AG04450 (cell line): ENCODE measurements at regions of chr2 and their contacts with region 1.

Region 1: DNA sequence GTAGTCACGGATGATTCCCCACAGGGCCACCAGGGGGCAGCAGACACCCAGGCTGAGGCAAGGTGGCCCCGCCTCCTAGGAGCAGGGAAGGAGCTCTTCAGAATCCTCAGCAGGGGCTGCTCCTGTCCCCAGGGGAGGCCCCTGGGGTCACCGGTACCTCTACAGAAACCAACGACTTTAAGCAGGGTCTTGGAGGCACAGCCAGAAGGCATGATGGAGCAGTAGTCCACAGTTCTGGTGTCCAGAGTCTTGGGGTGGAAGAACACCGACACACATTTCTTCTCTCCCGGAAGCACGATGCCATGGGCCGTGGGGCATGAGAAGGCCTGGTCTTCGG is 11.5 kb downstream of the CFAP65 start:
- DNase-seq: peak; percentile 33
- H3K4me3 ChIP-seq: no peak overlapping the region
- H3K27ac ChIP-seq: no peak overlapping the region
- H3K27me3 ChIP-seq: peaks cover 41% of the 10 kb centered on the region
- CTCF ChIP-seq: peak; percentile 95

Region 2: GRCh38 chr2:219010162-219010756 is 19.5 kb before region 1 on chr2:
- CTCF ChIA-PET with region 1: interaction called, 14 read pairs
- POLR2A ChIA-PET with region 1: no interaction called
- DNase-seq: no peak
- H3K4me3 ChIP-seq: no peak overlapping the region
- H3K27ac ChIP-seq: no peak overlapping the region
- H3K27me3 ChIP-seq: peaks cover 27% of the 10 kb centered on the region
- CTCF ChIP-seq: no peak; the same call in 1 of the 2 replicates

Region 3: GRCh38 chr2:219041252-219041651 is 11.5 kb after region 1 on chr2 and contains the start of gene CFAP65:
- CTCF ChIA-PET with region 1: interaction called, 28 read pairs
- POLR2A ChIA-PET with region 1: no interaction called
- DNase-seq: peak; percentile 20
- H3K4me3 ChIP-seq: peak within 1 kb of the TSS; percentile 64
- H3K27ac ChIP-seq: no peak within 1 kb of the TSS
- H3K27me3 ChIP-seq: peaks cover 26% of the 10 kb centered on the region
- CTCF ChIP-seq: no peak
- polyA plus RNA-seq, gene CFAP65: not detected in 2 replicates

Region 4: DNA sequence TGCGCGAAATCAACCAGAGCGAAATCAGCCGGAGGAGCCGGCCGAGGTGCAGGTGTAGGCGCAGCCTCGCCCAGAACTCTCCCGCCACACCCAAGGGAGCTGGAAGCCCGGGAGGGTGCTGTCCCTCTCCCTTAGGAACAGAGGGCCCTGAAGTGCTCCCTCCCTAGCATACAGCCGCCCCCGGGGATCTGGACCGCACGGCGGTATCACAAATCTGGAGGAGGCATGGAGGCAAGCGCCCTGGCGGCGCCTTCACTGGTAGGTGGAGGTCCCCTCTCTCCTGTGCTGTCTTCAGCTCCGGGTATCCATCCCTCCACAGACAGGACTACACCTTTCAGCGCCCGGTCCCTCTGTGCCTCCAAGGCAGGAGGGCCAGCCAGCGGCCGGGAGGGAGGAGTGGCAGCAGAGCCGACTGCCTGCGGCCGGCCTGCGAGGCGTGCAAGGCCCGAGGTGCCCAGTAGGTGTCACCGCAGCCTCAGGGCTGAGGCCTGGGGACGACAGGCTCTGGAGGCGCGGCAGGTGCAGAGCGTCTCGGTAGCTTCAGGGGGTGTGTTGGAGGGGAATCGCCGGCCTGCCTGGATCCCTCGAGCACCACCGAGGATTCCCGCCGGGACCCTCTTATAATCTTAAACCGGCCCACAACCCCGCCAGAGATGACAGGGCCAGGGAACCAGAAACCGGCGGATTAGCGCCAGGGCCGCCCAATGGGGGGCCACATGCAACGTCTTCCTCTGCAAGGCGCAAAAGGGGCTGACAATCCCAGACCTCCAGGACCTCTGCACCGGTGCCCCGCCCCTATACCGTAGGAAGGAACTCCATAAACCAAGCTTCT is 28.1 kb after region 1 on chr2:
- CTCF ChIA-PET with region 1: interaction called, 12 read pairs
- POLR2A ChIA-PET with region 1: no interaction called
- DNase-seq: no peak
- H3K4me3 ChIP-seq: peak overlapping the region; percentile 13; the same call in 1 of the 2 replicates
- H3K27ac ChIP-seq: no peak overlapping the region
- H3K27me3 ChIP-seq: peaks cover 78% of the 10 kb centered on the region
- CTCF ChIP-seq: peak; percentile 89